ENCODE measurements at regions of chr4 and their contacts with region 1.

Region 1: DNA sequence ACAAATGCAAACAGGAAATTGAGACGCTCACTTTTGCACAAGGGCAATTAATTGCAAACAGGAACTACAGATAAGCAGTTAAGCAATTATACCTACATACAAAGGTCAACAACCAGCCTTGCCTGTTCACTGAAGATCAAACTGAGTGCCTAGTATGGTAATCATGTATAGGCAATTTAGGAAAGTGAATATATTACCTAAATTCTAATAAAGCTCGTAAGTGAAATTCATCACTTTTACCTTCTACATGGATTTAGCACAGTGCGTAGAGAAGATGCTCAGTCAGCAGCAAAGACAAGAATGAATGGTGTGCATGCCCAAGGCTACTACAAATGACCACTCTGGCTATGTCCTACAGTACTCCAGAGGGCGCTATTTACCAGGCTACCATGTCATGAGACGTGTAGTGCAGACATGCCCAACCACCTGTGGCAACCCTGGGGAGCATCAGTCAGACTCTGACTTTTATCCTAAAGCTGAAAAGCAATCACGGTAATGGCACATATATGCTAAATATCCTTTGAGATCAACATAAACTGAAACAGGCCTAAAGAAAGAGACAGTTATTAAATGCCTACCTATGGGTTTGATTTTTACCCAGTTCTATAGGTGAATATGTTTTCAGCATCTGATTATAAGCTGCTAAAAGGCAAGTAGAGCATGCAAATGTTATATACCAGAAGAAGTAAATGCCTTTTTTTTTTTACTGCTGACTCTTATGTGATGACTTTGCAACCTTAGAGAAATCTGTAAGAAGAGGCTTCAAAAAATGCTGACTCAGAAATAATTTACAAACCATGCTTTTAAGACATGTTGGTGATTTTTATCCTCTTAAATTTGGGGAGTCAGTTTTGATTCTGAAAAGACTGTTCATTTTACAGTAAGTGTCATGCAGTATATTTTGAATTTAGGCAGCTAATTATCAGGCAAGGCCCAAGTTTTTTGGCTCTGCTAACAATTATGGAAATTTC is 178.0 kb downstream of the PPP3CA start:
- DNase-seq: peak in 4 of 6 donors; percentile 35 to 71 (median 58)
- ATAC-seq: peak; percentile 91 to 99 (median 98)
- H3K4me3 ChIP-seq: no peak overlapping the region
- H3K27ac ChIP-seq: no peak overlapping the region
- H3K4me1 ChIP-seq: peaks cover 0 to 3% (median 3%) of the 10 kb centered on the region in 3 donors
- H3K27me3 ChIP-seq: no peaks in the 10 kb centered on the region
- CTCF ChIP-seq: peak in 3 of 4 donors; percentile 30 to 69 (median 63)

Region 2: GRCh38 chr4:101730291-101731117 is 561.2 kb after region 1 on chr4:
- intact Hi-C with region 1: loop called in 1 of 3 experiments (anchors 10 kb)
- DNase-seq: peak; percentile 45 to 77 (median 53)
- ATAC-seq: peak; percentile 79 to 100 (median 98)
- H3K4me3 ChIP-seq: no peak overlapping the region
- H3K27ac ChIP-seq: no peak overlapping the region
- H3K4me1 ChIP-seq: no peaks in the 10 kb centered on the region
- H3K27me3 ChIP-seq: peaks cover 0 to 4% (median 0%) of the 10 kb centered on the region in 4 donors
- CTCF ChIP-seq: peak; percentile 13 to 50 (median 32)

Measured in pancreas (tissue), 10 donors.